ENCODE measurements at regions of chr6 and their contacts with region 1.

Region 1: GRCh38 chr6:35146453-35146852 is 5.3 kb upstream of the TCP11 start:
- DNase-seq: no peak
- H3K4me3 ChIP-seq: no peak overlapping the region
- H3K27me3 ChIP-seq: no peaks in the 10 kb centered on the region
- CTCF ChIP-seq: peak; percentile 74

Region 2: GRCh38 chr6:35230950-35231349 is 84.5 kb after region 1 on chr6:
- CTCF ChIA-PET with region 1: interaction called, 14 read pairs
- POLR2A ChIA-PET with region 1: no interaction called
- DNase-seq: no peak
- H3K4me3 ChIP-seq: no peak overlapping the region
- H3K27me3 ChIP-seq: no peaks in the 10 kb centered on the region
- CTCF ChIP-seq: no peak

Region 3: DNA sequence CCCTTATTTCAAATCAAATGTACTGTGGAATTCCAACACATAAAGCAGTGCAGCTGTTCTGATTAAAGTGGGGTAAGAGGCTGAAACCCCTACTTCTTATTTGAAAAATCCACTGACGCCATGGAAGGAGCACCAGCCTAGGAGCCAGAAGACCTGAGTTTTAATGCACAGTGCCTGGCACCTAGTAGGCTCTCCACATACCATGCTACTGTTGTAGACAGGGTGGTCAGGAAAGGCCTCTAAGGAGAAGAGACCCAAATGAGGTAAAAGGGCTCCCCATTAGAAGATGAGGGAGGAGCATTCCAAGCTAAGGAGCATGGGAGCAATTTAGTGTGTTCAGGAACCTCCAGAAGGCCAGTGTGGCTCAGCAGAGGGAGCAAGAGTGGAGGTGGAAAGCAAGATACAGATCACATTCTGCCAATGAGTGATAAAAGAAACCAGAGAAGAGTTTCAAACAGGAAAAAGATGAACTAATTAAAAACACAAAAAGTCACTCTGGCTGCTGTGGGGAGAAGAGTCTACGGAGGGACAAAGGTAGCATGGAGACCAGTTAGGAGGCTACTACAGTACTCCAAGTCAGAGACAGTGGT is 101.3 kb after region 1 on chr6:
- CTCF ChIA-PET with region 1: interaction called, 119 read pairs
- POLR2A ChIA-PET with region 1: no interaction called
- DNase-seq: no peak
- H3K4me3 ChIP-seq: no peak overlapping the region
- H3K27me3 ChIP-seq: no peaks in the 10 kb centered on the region
- CTCF ChIP-seq: peak; percentile 11; the same call in 1 of the 2 replicates